ENCODE measurements at regions of chr4 and their contacts with region 1.

Region 1: DNA sequence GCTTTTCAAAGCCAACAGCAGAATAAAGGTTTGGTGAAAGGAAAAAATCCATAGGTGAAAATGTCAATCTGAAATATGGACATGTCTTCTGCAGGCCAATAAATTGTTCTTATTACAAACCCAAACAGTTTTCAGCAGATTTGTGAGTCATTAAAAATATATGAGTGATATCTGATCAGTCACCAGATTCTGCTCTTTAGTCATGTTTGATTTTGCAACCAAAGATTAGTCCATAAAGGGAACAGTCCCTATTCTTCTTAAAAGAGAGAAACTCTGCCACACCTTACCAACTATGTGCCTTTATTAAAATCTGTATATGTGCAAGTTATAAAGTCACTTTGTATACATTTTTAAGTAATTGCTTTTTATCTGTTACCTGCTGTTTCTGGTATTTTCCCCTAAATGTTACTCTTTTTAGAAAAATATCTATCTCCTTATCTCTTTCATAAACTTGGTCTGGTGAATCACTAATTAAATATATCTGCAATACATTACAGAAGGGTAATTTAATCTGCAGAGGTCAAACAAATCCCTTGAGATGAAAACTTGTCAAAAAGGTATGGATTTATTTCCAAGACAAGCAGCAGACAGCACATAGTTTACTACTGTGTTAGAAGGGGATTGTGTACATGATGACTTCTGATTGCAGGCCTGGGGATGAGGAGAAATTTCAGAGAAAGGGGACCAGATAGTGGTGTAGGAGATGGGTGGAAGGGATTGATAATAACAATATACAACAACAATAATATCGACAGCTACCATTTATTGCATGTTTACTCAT is 322.9 kb upstream of the NWD2 start:
- DNase-seq: no peak

Region 2: DNA sequence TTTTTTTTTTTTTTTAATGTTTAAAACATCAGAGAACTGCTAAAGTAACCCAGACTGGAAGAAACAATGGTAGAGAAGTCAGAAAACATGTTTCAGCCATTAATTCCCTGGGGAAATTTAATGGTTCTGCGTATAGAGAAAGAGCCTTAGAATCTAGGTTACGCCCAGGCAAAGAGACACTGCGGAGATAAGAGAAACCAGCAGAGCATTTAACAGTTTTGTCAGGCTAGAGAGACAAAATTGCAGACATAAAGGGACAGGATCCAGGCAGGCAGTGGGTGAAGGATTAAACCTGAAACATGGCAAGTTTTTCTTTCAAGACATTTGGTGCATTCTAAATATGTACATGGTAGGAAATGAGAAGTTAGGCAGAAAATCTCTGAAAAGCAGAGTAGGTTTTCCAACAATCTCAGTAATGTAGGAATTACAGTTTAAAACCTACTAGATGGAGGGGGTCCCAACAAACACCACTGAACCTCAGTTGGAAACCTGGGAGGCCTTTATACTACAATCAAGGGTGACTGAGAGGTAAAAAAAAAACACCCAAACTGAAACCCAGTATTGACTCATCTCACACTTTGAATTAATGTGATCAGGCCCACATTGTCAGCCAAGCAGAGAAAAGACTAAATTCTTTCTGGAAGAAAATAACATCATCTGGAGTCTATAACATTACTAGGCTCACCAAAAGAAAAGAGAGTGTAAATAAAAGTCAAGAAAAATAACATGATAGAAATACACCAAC is 68.6 kb after region 1 on chr4:
- intact Hi-C with region 1: loop called (anchors 10 kb)
- DNase-seq: no peak

Region 3: DNA sequence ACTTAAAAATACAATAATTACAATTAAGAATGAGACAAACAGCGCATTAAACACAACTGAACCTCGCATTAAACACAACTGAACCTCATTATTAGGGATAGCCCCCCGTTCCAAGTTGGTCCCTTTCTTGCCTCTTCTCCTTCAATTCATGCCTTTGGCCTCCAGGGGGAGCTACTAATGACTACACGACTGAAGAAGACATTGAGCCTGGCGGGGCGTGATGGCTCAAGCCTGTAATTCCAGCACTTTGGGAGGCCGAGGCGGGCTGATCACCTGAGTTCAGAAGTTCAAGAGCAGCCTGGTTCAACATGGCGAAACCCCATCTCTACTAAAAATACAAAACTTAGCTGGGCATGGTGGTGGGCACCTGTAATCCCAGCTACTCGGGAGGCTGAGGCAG is 266.4 kb after region 1 on chr4:
- intact Hi-C with region 1: no loop called
- DNase-seq: no peak

Measured in posterior cingulate gyrus (tissue), 11 donors.